AG04449 (cell line): ENCODE measurements at regions of chr20 and their contacts with region 1.

Region 1: DNA sequence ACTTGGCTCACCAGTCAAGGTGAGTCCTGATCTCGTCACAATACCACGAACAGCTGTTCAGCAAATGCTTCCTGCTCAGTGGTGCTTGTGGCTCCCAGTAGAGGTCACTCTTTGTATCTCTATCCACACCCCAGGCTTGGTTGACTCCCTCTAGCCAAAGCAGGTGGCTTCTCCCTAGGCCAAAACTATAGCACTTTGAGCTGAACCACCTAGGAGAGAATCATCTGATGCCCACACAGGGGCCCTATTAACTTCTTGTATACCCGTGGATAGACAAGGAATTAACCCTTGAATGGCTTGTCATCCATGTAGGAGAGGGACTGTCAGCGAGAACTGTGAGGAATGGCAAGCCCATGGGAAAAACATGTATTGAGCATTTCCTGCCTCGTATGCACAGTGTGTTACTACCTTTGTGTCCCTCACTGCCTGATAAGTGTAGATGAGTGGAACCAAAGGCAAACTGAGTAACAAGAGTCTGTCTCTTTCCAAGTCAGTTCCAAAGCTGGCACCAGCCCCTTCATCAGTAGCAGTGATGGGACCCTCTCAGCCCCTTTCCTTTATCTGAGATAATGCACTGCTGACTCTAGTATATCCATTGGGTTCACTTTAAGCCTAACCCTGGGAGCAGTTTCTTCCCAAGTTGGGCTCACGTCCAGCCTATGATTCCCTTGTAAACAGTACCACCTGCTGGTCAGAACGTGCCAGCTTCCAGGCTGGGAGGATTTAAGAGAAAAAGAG is 42.5 kb downstream of the EIF2S2 start:
- DNase-seq: no peak
- H3K4me3 ChIP-seq: no peak overlapping the region
- CTCF ChIP-seq: peak; percentile 70

Region 2: DNA sequence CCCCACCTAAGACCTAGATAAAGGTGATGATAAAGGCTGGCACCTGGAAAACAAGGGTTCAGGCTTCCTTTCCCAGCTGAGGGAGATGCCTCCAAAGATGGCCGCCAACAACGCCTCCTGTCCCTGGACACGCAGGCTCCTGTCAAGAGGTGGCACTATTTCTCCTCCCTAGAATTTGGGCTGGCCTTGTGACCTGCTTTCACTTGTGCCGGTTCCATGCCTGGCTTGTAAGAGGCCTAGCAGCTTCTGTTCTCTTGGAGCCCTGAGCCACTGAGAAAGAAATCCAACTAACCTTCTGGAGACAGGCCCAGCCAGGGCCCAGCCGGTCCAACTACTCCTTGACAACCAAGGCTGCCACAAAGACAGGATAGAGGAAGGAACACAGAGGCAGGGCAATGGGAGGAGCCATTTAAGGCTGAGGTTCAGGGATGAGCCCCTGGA is 136.0 kb before region 1 on chr20:
- CTCF ChIA-PET with region 1: interaction called, 72 read pairs
- POLR2A ChIA-PET with region 1: no interaction called
- DNase-seq: no peak
- H3K4me3 ChIP-seq: no peak overlapping the region
- CTCF ChIP-seq: peak; percentile 61

Region 3: GRCh38 chr20:34058831-34059230 is 10.7 kb before region 1 on chr20:
- CTCF ChIA-PET with region 1: interaction called, 14 read pairs
- POLR2A ChIA-PET with region 1: no interaction called
- DNase-seq: no peak
- H3K4me3 ChIP-seq: no peak overlapping the region
- CTCF ChIP-seq: no peak

Region 4: DNA sequence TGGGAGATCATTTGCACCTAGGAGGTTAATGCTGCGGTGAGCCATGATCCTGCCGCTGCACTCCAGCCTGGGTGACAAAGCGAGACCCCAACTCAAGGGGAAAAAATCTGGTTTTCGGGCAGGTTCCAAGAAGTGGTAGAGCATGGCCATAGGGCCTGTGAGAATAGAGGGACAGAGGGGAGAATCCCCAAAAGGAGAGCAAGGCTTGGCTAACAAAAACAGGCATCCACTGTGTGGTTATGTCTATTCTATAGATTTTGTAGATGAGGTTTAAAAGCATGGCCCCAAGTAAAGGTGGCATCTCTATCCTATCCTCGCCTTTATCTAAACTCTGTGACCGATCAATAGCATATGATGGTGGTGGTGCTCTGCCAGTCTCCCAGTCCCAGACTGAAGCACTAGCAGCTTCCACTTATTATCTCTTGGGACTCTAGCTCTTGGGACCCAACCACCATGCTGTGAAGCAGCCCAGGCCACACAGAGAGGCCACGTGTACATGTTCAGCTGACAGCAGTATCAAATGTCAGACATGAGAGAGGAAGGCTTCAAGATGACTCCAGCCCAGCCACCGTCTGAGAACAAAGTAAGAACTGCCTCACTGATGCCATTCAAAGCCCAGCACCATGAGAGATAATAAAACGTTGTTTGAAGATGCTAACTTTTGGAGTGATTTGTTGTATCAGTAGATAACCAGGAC is 14.9 kb after region 1 on chr20:
- CTCF ChIA-PET with region 1: interaction called, 35 read pairs
- POLR2A ChIA-PET with region 1: no interaction called
- DNase-seq: no peak
- H3K4me3 ChIP-seq: no peak overlapping the region
- CTCF ChIP-seq: no peak

Region 5: GRCh38 chr20:34129518-34130162 is 60.1 kb after region 1 on chr20:
- CTCF ChIA-PET with region 1: interaction called, 10 read pairs
- POLR2A ChIA-PET with region 1: no interaction called
- DNase-seq: no peak
- H3K4me3 ChIP-seq: no peak overlapping the region
- CTCF ChIP-seq: peak; percentile 71